H1 (cell line): ENCODE measurements at regions of chr3 and their contacts with region 1.

Region 1: DNA sequence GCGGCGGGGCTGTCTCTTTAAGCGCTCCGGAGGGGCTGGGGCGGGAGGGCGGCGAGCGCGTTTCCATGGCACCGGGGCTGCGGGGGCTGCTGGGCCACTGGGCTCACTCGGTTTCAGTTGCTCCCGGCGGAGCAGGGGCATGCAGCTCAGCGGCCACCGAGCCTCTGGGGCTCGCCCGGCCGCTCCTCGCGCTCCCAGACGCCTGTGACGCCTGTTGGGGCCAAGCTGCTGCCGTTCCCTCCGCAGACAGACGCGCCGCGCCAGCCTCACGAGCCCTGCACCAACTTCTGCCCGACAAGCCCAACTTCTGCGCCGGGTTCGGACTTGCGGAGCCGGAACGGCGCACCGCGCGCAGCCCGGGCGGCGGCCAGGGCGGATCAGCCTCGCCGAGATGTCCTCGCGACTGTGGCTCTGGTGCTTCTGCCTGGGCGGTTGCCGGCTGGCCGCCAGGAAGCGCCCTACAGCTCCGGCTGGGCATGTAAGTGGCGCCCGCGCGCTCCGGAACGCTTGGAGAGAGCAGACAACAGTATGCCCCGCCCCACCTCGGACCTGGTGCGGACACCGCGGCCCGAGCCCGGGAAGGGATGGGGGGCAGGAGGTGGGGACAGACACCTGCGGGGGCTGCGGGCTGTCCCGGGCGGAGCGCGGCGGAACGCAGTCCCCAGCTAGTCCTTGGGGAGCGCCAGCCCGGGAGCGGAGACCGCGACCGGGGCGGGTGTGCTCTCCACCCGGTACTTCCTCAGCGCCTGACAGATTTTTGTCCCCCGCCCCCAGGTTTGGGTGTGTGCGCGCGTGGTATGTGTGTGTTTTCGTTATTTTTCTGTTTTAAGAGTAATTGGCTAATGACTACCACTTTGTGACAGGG is 154.1 kb upstream of the GOLIM4 start:
- DNase-seq: peak; percentile 73 to 89
- H3K4me3 ChIP-seq: peak overlapping the region; percentile 47 to 84 (median 79)
- H3K27ac ChIP-seq: peak overlapping the region; percentile 63; the same call in 1 of the 2 replicates
- H3K4me1 ChIP-seq: peaks cover 0 to 4% (median 2%) of the 10 kb centered on the region in 4 experiments; a peak in 2 of 7 replicates
- H3K27me3 ChIP-seq: peaks cover 0 to 10% (median 2%) of the 10 kb centered on the region in 4 experiments; a peak in 5 of 7 replicates
- CTCF ChIP-seq: peak; percentile 60 to 66 (median 62)
- EP300 ChIP-seq: no peak; a peak in 1 of 3 replicates
- POLR2A ChIP-seq: peak; percentile 73 to 92
- RAD21 ChIP-seq: peak; percentile 57 to 63

Region 2: DNA sequence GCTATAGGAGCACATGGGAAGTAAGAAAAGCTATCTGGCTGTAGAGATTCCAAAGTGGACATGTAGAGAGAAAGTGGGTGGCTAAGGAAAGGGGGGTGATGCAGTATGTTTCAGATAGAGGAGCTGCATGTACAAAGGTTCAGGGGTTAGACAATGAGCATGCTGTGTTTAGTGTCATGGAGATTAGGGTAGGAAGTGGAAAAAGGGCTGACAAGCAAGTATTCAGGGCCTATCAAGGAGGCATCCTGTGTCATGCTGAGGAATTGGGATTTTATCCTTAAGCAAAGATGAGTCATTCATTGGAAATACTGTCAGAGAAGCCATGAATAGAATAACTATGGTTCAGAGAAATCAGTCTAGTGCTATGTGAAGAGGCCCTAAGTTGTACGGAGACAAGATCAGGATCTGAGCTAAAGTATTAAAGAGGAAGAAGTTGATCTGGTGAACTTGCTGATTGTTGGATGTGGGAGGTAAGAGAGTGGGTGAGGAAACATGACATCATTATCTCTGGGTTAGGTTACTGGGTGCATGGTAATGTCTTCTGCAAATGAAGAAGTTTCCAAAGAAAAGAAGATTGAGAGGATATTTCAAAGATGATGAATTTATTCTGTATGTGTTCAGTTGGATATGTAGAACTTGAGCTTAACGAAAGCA is 22.7 kb after region 1 on chr3:
- CTCF ChIA-PET with region 1: interaction called, 7 read pairs
- POLR2A ChIA-PET with region 1: interaction called, 10 read pairs
- DNase-seq: no peak
- H3K4me3 ChIP-seq: no peak overlapping the region
- H3K27ac ChIP-seq: no peak overlapping the region
- H3K4me1 ChIP-seq: peaks cover 0 to 3% (median 2%) of the 10 kb centered on the region in 4 experiments; a peak in 2 of 7 replicates
- H3K27me3 ChIP-seq: no peaks in the 10 kb centered on the region
- CTCF ChIP-seq: no peak
- EP300 ChIP-seq: 0 out of 3 replicates have a peak, but pooled peaks of 1 of the 2 experiments have one; percentile 38
- POLR2A ChIP-seq: no peak
- RAD21 ChIP-seq: no peak